ENCODE measurements at regions of chr3 and their contacts with region 1.

Region 1: DNA sequence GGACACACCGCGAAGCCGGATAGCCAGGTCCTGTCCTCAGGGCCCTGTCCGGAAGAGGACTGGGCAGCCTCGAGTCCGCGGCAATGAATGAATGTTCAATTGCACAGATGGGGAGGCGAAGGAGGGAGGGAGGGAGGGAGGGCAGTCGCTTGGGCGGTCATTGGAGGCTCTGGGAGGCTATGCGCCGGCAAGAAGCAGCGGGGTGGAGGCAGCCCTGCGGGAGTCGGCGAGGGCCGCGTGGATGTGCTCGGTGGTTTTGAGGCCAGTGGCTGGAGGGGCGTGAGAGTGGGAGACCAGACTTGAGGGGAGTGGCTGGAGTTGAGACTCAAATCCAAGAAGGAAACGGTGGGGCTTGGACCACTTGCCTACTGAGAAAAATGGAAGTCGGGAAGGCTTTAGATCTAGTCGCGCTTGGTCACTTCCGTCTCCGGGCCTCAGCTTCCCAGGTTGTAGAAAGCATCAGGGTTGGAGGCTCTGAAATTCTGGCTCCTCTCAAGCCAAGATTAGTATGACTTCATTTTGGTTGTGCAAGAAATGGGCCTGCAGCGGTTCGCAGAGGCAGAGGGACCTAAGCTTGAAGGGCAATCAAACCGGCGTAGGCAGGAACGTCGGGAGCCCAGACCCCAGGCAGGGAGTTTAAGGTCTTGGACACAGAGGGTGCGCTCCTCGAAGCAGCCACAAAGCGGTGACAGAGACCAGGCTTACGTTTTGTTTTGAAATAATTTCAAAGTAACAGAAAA is 21.1 kb upstream of the PLXND1 start:
- DNase-seq: peak; percentile 78
- ATAC-seq: peak; percentile 52
- H3K4me3 ChIP-seq: peak overlapping the region; percentile 49 to 86 (median 72)
- H3K4me3 Mint-ChIP-seq: peak overlapping the region; percentile 98
- H3K27ac ChIP-seq: peak overlapping the region in 1 of 2 donors; percentile 37
- H3K27ac Mint-ChIP-seq: peak overlapping the region; percentile 88
- H3K4me1 ChIP-seq: peaks cover 5 to 18% of the 10 kb centered on the region in 2 donors
- H3K4me1 Mint-ChIP-seq: peaks cover 17% of the 10 kb centered on the region
- H3K27me3 ChIP-seq: no peaks in the 10 kb centered on the region
- H3K27me3 Mint-ChIP-seq: no peaks in the 10 kb centered on the region
- CTCF ChIP-seq: peak; percentile 77

Region 2: GRCh38 chr3:128824132-128824850 is 803.3 kb before region 1 on chr3:
- CTCF ChIA-PET with region 1: no interaction called
- POLR2A ChIA-PET with region 1: no interaction called
- intact Hi-C with region 1: no loop called
- DNase-seq: no peak
- ATAC-seq: no peak
- H3K4me3 ChIP-seq: no peak overlapping the region
- H3K4me3 Mint-ChIP-seq: no peak overlapping the region
- H3K27ac ChIP-seq: no peak overlapping the region
- H3K27ac Mint-ChIP-seq: no peak overlapping the region
- H3K4me1 ChIP-seq: no peaks in the 10 kb centered on the region
- H3K4me1 Mint-ChIP-seq: no peaks in the 10 kb centered on the region
- H3K27me3 ChIP-seq: no peaks in the 10 kb centered on the region
- H3K27me3 Mint-ChIP-seq: no peaks in the 10 kb centered on the region
- CTCF ChIP-seq: no peak

Region 3: GRCh38 chr3:129606636-129607390 is 20.8 kb before region 1 on chr3 and contains the start of gene PLXND1:
- CTCF ChIA-PET with region 1: interaction called, 3 read pairs
- POLR2A ChIA-PET with region 1: interaction called, 9 read pairs
- intact Hi-C with region 1: loop called (anchors 2 kb)
- DNase-seq: peak; percentile 57
- ATAC-seq: peak; percentile 78
- H3K4me3 ChIP-seq: peak within 1 kb of the TSS in 4 of 5 experiments; percentile 48 to 55 (median 53)
- H3K4me3 Mint-ChIP-seq: peak within 1 kb of the TSS; percentile 95
- H3K27ac ChIP-seq: no peak within 1 kb of the TSS
- H3K27ac Mint-ChIP-seq: peak within 1 kb of the TSS; percentile 89
- H3K4me1 ChIP-seq: peaks cover 16 to 19% of the 10 kb centered on the region in 2 donors
- H3K4me1 Mint-ChIP-seq: peaks cover 18% of the 10 kb centered on the region
- H3K27me3 ChIP-seq: peaks cover 0 to 37% (median 14%) of the 10 kb centered on the region in 4 experiments
- H3K27me3 Mint-ChIP-seq: peaks cover 20% of the 10 kb centered on the region
- CTCF ChIP-seq: no peak
- total RNA-seq, gene PLXND1: 74.4 and 89.8 TPM in 2 replicates

Region 4: DNA sequence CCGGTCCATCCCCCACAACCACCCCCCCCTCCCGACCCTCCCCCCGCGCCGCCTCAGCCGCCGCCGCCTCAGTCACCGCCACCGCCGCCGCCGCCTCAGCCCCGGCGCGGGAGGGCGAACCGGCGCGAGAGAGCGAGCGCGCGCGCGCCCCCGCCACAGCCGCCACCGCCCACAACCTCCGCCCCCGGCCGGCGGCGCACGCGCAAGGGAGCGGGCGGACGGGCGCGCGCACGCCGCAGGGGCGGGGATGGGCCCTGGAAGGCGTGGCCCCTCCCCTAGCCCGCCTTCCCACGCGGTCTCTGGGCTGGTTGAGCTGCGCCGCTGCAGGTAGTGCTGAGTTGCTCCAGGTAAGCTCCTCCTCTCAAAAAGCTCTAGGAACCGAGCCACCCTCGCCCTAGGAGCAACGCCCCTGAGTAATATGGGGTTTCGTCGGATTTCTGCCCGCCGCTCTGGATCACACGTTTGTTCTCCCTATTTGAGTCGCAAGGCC is 266.0 kb after region 1 on chr3 and contains the start of gene TMCC1:
- CTCF ChIA-PET with region 1: interaction called, 3 read pairs
- POLR2A ChIA-PET with region 1: no interaction called
- intact Hi-C with region 1: loop called (anchors 2 kb)
- DNase-seq: peak; percentile 94
- ATAC-seq: peak; percentile 87
- H3K4me3 ChIP-seq: peak within 1 kb of the TSS; percentile 79 to 97 (median 89)
- H3K4me3 Mint-ChIP-seq: peak within 1 kb of the TSS; percentile 93
- H3K27ac ChIP-seq: peak within 1 kb of the TSS; percentile 87 to 93
- H3K27ac Mint-ChIP-seq: peak within 1 kb of the TSS; percentile 90
- H3K4me1 ChIP-seq: peaks cover 30 to 34% of the 10 kb centered on the region in 2 donors
- H3K4me1 Mint-ChIP-seq: peaks cover 39% of the 10 kb centered on the region
- H3K27me3 ChIP-seq: no peaks in the 10 kb centered on the region
- H3K27me3 Mint-ChIP-seq: no peaks in the 10 kb centered on the region
- CTCF ChIP-seq: no peak
- total RNA-seq, gene TMCC1: 32.2 and 37.8 TPM in 2 replicates

Region 5: GRCh38 chr3:130093741-130094391 is 466.3 kb after region 1 on chr3:
- CTCF ChIA-PET with region 1: interaction called, 3 read pairs
- POLR2A ChIA-PET with region 1: no interaction called
- intact Hi-C with region 1: loop called (anchors 5 kb)
- DNase-seq: peak; percentile 54
- ATAC-seq: peak; percentile 63
- H3K4me3 ChIP-seq: peak overlapping the region in 4 of 5 experiments; percentile 10 to 44 (median 41)
- H3K4me3 Mint-ChIP-seq: peak overlapping the region; percentile 72
- H3K27ac ChIP-seq: peak overlapping the region in 1 of 2 donors; percentile 41
- H3K27ac Mint-ChIP-seq: peak overlapping the region; percentile 79
- H3K4me1 ChIP-seq: peaks cover 11 to 22% of the 10 kb centered on the region in 2 donors
- H3K4me1 Mint-ChIP-seq: peaks cover 29% of the 10 kb centered on the region
- H3K27me3 ChIP-seq: no peaks in the 10 kb centered on the region
- H3K27me3 Mint-ChIP-seq: no peaks in the 10 kb centered on the region
- CTCF ChIP-seq: no peak